H1 (cell line): ENCODE measurements at regions of chr9 and their contacts with region 1.

Region 1: GRCh38 chr9:76419782-76420380 is 25.7 kb upstream of the RFK start:
- DNase-seq: peak in 1 of 2 experiments; percentile 35
- H3K4me3 ChIP-seq: no peak overlapping the region
- H3K27ac ChIP-seq: no peak overlapping the region
- H3K4me1 ChIP-seq: peaks cover 0 to 6% (median 0%) of the 10 kb centered on the region in 4 experiments; a peak in 2 of 7 replicates
- H3K27me3 ChIP-seq: peaks cover 0 to 4% (median 0%) of the 10 kb centered on the region in 4 experiments; a peak in 1 of 7 replicates
- CTCF ChIP-seq: peak in 2 of 3 experiments; percentile 43 to 70; a peak in 3 of 4 replicates
- EP300 ChIP-seq: no peak
- POLR2A ChIP-seq: no peak
- RAD21 ChIP-seq: peak; percentile 35 to 47; a peak in 3 of 4 replicates

Region 2: DNA sequence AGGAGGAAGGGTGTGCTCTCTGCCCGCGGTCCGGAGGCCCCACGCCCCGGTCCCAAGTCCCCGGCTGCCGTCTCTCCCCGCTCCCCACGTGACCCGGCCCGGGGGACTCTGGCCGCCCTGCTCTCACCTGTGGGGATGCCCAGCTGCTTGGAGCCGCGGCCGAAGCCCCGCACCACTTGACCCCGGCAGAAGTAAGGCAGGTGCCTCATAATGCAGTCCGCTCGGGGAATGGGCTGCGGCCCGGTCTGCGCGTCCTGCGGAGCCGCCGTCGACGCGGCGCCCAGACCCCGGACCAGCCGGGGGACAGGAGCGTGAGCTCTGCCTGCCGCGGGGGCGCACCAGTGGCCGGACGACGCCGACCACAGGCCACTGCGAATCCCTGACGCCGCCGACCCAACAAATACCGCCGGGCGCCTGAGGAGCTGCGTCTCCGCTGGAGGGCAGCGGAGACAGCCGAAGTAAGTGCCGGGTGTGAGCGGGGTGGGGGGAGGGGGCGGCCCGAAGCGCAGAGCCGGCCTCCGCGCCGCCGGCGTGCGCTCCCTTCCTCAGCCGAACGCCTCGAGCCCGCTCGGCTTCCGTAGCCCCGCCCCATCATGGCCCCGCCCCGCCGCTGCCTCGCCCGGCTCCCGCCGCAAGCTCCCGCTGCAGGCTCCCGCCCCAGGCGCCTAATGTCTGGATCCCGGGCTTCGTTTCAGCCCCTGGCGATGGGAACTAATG is 25.8 kb before region 1 on chr9 and contains the start of gene RFK:
- CTCF ChIA-PET with region 1: interaction called, 10 read pairs
- POLR2A ChIA-PET with region 1: interaction called, 3 read pairs
- DNase-seq: peak; percentile 78 to 99
- H3K4me3 ChIP-seq: peak within 1 kb of the TSS; percentile 74 to 86 (median 78)
- H3K27ac ChIP-seq: peak within 1 kb of the TSS; percentile 75
- H3K4me1 ChIP-seq: no peaks in the 10 kb centered on the region
- H3K27me3 ChIP-seq: no peaks in the 10 kb centered on the region
- CTCF ChIP-seq: peak; percentile 34 to 59 (median 45)
- EP300 ChIP-seq: peak in 1 of 2 experiments; percentile 65; a peak in 1 of 3 replicates
- POLR2A ChIP-seq: peak; percentile 50 to 75
- RAD21 ChIP-seq: peak; percentile 60 to 73
- total RNA-seq, gene RFK: 10.6 and 14.9 TPM in 2 replicates

Region 3: GRCh38 chr9:76404401-76404800 is 15.5 kb before region 1 on chr9:
- CTCF ChIA-PET with region 1: interaction called, 12 read pairs
- POLR2A ChIA-PET with region 1: interaction called, 3 read pairs
- DNase-seq: no peak
- H3K4me3 ChIP-seq: no peak overlapping the region
- H3K27ac ChIP-seq: no peak overlapping the region
- H3K4me1 ChIP-seq: peaks cover 0 to 3% (median 0%) of the 10 kb centered on the region in 4 experiments; a peak in 2 of 7 replicates
- H3K27me3 ChIP-seq: no peaks in the 10 kb centered on the region
- CTCF ChIP-seq: no peak
- EP300 ChIP-seq: no peak
- POLR2A ChIP-seq: no peak
- RAD21 ChIP-seq: no peak

Region 4: GRCh38 chr9:76433836-76434235 is 14.0 kb after region 1 on chr9:
- CTCF ChIA-PET with region 1: interaction called, 23 read pairs
- POLR2A ChIA-PET with region 1: no interaction called
- DNase-seq: no peak
- H3K4me3 ChIP-seq: no peak overlapping the region
- H3K27ac ChIP-seq: no peak overlapping the region
- H3K4me1 ChIP-seq: peaks cover 0 to 5% (median 0%) of the 10 kb centered on the region in 4 experiments; a peak in 5 of 7 replicates
- H3K27me3 ChIP-seq: no peaks in the 10 kb centered on the region
- CTCF ChIP-seq: no peak
- EP300 ChIP-seq: no peak
- POLR2A ChIP-seq: no peak
- RAD21 ChIP-seq: no peak

Region 5: DNA sequence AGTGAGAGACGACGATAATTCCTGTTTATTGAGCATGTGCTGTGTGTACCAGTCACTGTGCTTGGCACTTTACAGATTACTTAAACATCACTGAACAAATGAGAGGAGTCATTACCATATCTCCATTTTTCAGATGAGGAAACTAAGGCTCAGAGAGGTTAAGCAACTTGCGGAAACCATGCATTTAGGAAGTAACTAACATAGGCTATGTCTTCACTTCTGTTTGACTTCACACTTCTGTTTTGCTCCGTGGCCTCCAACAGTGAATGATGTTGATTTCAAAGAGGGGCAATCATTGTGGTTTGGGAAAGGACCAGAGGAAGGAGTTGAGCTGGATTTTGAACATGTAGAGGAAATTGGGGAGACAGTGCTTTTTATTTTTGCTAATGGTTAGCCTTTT is 55.8 kb after region 1 on chr9:
- CTCF ChIA-PET with region 1: no interaction called
- POLR2A ChIA-PET with region 1: no interaction called
- DNase-seq: no peak
- H3K4me3 ChIP-seq: no peak overlapping the region
- H3K27ac ChIP-seq: no peak overlapping the region
- H3K4me1 ChIP-seq: peaks cover 4 to 17% (median 10%) of the 10 kb centered on the region in 4 experiments
- H3K27me3 ChIP-seq: no peaks in the 10 kb centered on the region
- CTCF ChIP-seq: no peak
- EP300 ChIP-seq: no peak
- POLR2A ChIP-seq: no peak
- RAD21 ChIP-seq: no peak